Activated naive CD8-positive, alpha-beta T cell treated with anti-CD3 and anti-CD28 coated beads, Interleukin-2, amount 10 ng/mL, durations not matched to agents 7 days and 5 days (primary cell): ENCODE measurements at regions of chr2 and their contacts with region 1.

Region 1: GRCh38 chr2:181457121-181457740 is at the start of gene ITGA4:
- DNase-seq: peak; percentile 92
- ATAC-seq: peak; percentile 87
- H3K4me3 Mint-ChIP-seq: peak within 1 kb of the TSS; percentile 99
- H3K27ac Mint-ChIP-seq: peak within 1 kb of the TSS; percentile 94
- H3K4me1 Mint-ChIP-seq: peaks cover 40% of the 10 kb centered on the region
- H3K27me3 Mint-ChIP-seq: no peaks in the 10 kb centered on the region
- total RNA-seq, gene ITGA4: 216 to 227 TPM

Region 2: GRCh38 chr2:181104512-181105115 is 352.6 kb before region 1 on chr2:
- POLR2A ChIA-PET with region 1: interaction called, 19 read pairs
- DNase-seq: no peak
- ATAC-seq: no peak
- H3K4me3 Mint-ChIP-seq: peak overlapping the region; percentile 36
- H3K27ac Mint-ChIP-seq: no peak overlapping the region
- H3K4me1 Mint-ChIP-seq: peaks cover 25% of the 10 kb centered on the region
- H3K27me3 Mint-ChIP-seq: no peaks in the 10 kb centered on the region

Region 3: GRCh38 chr2:181123798-181124231 is 333.4 kb before region 1 on chr2:
- POLR2A ChIA-PET with region 1: interaction called, 48 read pairs
- DNase-seq: no peak
- ATAC-seq: peak; percentile 95
- H3K4me3 Mint-ChIP-seq: peak overlapping the region; percentile 84
- H3K27ac Mint-ChIP-seq: peak overlapping the region; percentile 90
- H3K4me1 Mint-ChIP-seq: peaks cover 49% of the 10 kb centered on the region
- H3K27me3 Mint-ChIP-seq: no peaks in the 10 kb centered on the region

Region 4: DNA sequence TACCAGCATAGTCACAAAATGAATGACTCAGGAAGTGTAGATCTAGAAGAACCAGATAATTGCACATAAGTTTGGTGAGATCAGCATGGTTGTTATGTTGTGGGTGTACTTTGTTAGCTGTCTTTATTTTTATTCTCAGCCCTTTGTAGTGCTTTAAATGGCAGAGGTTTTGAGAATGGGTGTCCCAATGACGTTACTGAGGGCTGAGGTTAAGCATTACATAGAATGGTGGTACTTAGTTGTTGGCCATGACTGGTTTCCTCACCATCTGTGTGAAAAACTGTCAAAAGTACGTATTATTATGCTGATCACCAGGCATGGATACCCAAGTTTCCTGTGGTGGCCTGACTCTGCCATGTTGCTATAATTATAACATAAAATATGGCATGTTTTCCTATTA is 311.1 kb before region 1 on chr2:
- POLR2A ChIA-PET with region 1: interaction called, 14 read pairs
- DNase-seq: no peak
- ATAC-seq: peak; percentile 26
- H3K4me3 Mint-ChIP-seq: peak overlapping the region; percentile 10
- H3K27ac Mint-ChIP-seq: peak overlapping the region; percentile 39
- H3K4me1 Mint-ChIP-seq: peaks cover 49% of the 10 kb centered on the region
- H3K27me3 Mint-ChIP-seq: no peaks in the 10 kb centered on the region

Region 5: DNA sequence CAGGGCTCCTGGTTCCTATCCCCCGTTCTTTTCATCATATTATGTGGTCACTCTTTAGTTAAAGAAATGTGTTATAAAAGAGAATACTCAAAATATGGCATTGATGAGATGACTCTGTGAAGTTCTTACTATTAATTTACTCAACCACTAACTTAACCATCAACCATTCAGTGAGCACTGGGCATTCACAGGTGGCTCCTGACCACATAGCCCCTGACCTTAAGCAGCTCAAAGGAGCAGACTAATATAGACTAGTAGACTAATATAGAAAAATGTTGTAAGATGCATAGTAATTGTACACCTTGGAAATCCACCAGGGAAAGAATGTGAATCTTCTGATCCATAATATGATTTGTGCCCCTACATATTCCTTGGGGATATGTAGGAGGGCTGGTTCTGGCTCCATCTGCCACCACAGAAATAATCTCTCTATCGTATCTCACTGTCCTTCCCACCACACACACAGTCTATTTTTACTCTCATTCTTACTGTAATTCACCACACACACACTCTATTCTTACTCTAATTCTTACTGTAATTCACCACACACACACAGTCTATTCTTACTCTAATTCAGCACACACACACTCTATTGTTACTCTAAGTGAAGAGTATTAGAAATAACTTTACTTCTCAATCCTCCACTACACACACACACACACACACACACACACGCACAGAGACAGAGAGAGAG is 188.9 kb before region 1 on chr2:
- POLR2A ChIA-PET with region 1: no interaction called
- DNase-seq: no peak
- ATAC-seq: no peak
- H3K4me3 Mint-ChIP-seq: no peak overlapping the region
- H3K27ac Mint-ChIP-seq: no peak overlapping the region
- H3K4me1 Mint-ChIP-seq: peaks cover 7% of the 10 kb centered on the region
- H3K27me3 Mint-ChIP-seq: no peaks in the 10 kb centered on the region

Region 6: DNA sequence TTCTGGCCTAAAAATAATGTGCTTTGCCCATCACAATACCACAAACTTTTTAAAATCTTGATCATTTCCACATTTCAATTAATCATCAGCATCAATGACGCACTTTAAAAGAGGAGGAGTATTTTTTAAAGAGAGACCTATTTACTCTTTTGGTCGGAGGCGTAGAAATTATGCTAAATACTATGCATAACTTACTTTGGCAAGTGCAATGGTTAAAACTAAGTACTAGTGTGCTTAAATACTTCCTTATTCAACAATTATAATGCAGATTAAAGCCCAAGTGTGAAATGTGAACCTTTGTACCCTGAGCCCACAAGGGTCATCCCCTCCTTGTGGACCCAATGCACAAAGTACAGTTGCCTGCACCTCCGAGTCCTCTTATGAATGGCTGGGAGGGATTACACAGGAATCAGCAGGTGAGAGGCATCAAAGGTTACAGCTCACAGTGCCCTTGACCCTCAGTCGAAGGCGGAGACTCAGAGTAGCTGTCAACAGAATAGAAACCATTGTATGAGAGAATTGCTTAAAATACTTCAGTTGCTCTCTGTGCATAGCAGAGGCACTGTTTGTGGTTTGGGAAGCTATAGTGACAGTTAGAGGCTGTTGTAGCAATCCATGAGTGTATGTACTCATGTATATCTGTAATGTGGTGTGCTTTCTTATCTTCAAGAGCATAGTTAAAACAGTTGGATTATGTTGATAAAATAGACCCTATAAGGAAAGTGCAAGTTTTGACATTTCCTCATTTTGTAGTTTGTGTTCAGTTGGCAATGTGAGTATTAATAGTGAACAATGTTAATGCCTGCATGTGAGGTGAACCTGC is 151.7 kb before region 1 on chr2:
- POLR2A ChIA-PET with region 1: interaction called, 219 read pairs
- DNase-seq: peak; percentile 56
- ATAC-seq: peak; percentile 86
- H3K4me3 Mint-ChIP-seq: peak overlapping the region; percentile 85
- H3K27ac Mint-ChIP-seq: peak overlapping the region; percentile 96
- H3K4me1 Mint-ChIP-seq: peaks cover 68% of the 10 kb centered on the region
- H3K27me3 Mint-ChIP-seq: no peaks in the 10 kb centered on the region

Region 7: DNA sequence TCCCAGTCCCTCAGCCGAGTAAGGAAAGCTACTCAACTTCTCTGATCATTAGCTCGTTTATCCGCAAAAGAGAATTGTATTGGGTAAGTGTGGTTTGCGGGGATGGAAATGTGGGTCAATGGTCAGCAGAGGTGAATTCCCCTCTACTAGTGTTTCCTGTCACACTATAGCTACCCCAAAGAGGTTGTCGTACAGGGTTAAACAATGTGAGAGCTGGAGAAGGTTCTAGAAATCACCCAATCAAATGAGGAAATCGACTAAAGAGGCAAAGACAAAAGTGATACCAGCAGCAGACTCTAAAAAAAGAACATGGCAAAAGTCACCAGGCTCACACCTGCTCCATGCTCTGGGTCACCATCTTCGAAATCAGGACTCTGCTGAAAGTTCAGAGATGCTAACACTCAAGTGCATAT is 144.7 kb before region 1 on chr2:
- POLR2A ChIA-PET with region 1: interaction called, 219 read pairs
- DNase-seq: peak; percentile 36
- ATAC-seq: peak; percentile 69
- H3K4me3 Mint-ChIP-seq: peak overlapping the region; percentile 91
- H3K27ac Mint-ChIP-seq: peak overlapping the region; percentile 99
- H3K4me1 Mint-ChIP-seq: peaks cover 44% of the 10 kb centered on the region
- H3K27me3 Mint-ChIP-seq: no peaks in the 10 kb centered on the region

Region 8: DNA sequence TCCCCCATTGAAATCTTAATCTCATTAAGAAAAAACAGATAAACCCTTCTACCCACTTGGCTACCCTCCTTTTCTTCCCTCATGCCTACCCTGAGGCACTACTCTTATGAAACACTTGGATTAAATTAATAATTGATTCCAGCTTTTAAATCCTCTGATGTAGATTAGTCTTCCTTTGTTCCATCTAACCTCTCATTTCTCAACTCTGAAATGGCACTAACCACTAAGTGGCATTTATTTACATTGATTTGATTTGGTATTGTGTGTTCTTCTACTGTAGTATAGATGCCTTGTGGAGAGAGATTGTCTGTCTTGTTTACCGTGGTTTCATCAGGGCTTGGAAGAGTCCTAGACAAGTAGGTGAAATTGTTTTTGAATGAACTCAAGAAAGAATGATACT is 26.6 kb after region 1 on chr2:
- POLR2A ChIA-PET with region 1: no interaction called
- DNase-seq: no peak
- ATAC-seq: no peak
- H3K4me3 Mint-ChIP-seq: no peak overlapping the region
- H3K27ac Mint-ChIP-seq: no peak overlapping the region
- H3K4me1 Mint-ChIP-seq: peaks cover 4% of the 10 kb centered on the region
- H3K27me3 Mint-ChIP-seq: no peaks in the 10 kb centered on the region